Activated CD4-positive, alpha-beta T cell treated with anti-CD3 and anti-CD28 coated beads, Interleukin-2, amount 10 ng/mL, durations not matched to agents 7 days and 5 days (primary cell): ENCODE measurements at regions of chr17 and their contacts with region 1.

Region 1: DNA sequence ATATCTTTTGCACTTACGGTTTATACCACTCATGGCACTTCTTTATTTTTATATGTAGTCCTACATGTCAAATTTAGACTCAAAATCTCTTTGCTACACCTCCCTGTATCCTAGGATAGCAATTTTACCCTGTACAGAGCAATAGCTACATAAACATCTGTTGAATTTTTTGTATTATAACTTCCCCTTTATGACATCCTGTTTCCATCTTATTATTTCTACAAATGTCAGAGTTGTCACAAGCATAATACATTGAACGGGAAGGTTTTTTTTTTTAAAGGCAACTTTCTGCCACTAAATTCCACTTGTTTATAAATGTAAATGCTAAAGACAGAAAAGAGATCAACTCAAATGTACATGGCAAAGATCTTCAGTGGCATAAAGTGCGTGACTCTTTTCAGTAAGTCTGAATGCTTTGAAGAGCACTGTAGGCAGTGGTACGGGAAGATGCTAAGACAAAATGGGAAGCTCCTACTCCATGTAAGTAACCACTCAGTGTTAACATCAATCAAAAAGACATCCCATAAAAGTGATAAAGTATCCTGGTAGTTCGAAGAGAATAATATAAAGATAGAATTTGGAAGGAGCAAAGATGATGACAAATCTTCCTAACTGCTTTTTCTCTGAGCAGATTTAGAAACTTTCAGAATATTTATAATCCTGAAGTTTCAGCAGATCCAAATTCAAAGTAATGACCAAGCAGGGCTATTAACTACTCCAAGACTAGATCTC is 26.8 kb downstream of the GNA13 start:
- DNase-seq: no peak
- H3K4me3 Mint-ChIP-seq: no peak overlapping the region
- H3K27ac Mint-ChIP-seq: peak overlapping the region; percentile 4
- H3K4me1 Mint-ChIP-seq: peaks cover 62% of the 10 kb centered on the region
- H3K27me3 Mint-ChIP-seq: no peaks in the 10 kb centered on the region

Region 2: GRCh38 chr17:65015855-65016254 is 13.9 kb before region 1 on chr17:
- CTCF ChIA-PET with region 1: interaction called, 4 read pairs
- POLR2A ChIA-PET with region 1: interaction called, 21 read pairs
- DNase-seq: no peak
- H3K4me3 Mint-ChIP-seq: no peak overlapping the region
- H3K27ac Mint-ChIP-seq: no peak overlapping the region
- H3K4me1 Mint-ChIP-seq: peaks cover 56% of the 10 kb centered on the region
- H3K27me3 Mint-ChIP-seq: no peaks in the 10 kb centered on the region

Region 3: GRCh38 chr17:65065906-65066305 is 36.1 kb after region 1 on chr17:
- CTCF ChIA-PET with region 1: no interaction called
- POLR2A ChIA-PET with region 1: no interaction called
- DNase-seq: no peak
- H3K4me3 Mint-ChIP-seq: no peak overlapping the region
- H3K27ac Mint-ChIP-seq: no peak overlapping the region
- H3K4me1 Mint-ChIP-seq: no peaks in the 10 kb centered on the region
- H3K27me3 Mint-ChIP-seq: peaks cover 4% of the 10 kb centered on the region